T-cell (primary cell): ENCODE measurements at regions of chr5 and their contacts with region 1.

Region 1: DNA sequence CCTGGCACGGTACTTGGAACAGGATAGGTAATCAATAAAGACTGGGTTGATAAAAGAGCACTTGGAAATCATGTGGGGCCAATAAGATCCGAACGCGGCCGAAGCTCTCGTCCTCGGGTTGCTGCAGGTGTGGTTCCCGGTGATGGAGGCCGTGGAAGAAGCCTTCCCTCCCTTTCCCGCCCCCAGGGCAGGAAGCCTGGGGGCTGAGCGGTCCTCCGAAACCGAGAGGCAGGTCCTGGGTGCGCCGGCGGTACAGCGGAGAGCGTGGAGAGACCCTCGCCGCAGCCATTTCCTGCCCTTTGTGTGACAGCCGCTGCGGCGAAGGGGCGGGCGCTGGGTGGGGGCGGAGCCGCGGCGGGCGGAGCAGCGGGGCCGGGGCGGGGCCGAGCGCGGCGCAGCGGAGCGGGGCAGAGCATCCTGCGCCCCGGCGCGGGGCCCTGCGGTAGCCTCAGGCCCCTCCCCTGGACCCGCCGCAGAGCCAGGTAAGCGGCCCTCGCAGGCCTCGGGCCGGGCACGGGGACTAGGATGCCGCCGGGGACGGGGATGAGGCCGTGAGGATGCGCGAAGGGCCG is at the start of gene CYFIP2:
- DNase-seq: peak; percentile 74 to 93 (median 84)
- ATAC-seq: peak; percentile 89 to 93 (median 90)
- H3K4me3 ChIP-seq: peak within 1 kb of the TSS; percentile 68 to 73
- H3K4me3 Mint-ChIP-seq: peak within 1 kb of the TSS; percentile 93 to 96 (median 94)
- H3K27ac ChIP-seq: peak within 1 kb of the TSS; percentile 84
- H3K27ac Mint-ChIP-seq: peak within 1 kb of the TSS; percentile 99
- H3K4me1 ChIP-seq: peaks cover 52 to 63% of the 10 kb centered on the region in 2 experiments
- H3K4me1 Mint-ChIP-seq: peaks cover 70 to 80% (median 78%) of the 10 kb centered on the region in 3 donors
- H3K27me3 ChIP-seq: no peaks in the 10 kb centered on the region
- H3K27me3 Mint-ChIP-seq: no peaks in the 10 kb centered on the region
- total RNA-seq, gene CYFIP2: 362 to 497 (median 398) TPM

Region 2: GRCh38 chr5:157225469-157226422 is 40.1 kb before region 1 on chr5:
- CTCF ChIA-PET with region 1: no interaction called
- POLR2A ChIA-PET with region 1: interaction called in 1 of 2 experiments, 15 read pairs
- DNase-seq: peak in 1 of 35 experiments; percentile 66
- ATAC-seq: no peak
- H3K4me3 ChIP-seq: no peak overlapping the region
- H3K4me3 Mint-ChIP-seq: peak overlapping the region; percentile 22 to 45 (median 43)
- H3K27ac ChIP-seq: peak overlapping the region; percentile 48
- H3K27ac Mint-ChIP-seq: peak overlapping the region; percentile 88 to 89
- H3K4me1 ChIP-seq: peaks cover 42 to 51% of the 10 kb centered on the region in 2 experiments
- H3K4me1 Mint-ChIP-seq: peaks cover 54 to 75% (median 69%) of the 10 kb centered on the region in 3 donors
- H3K27me3 ChIP-seq: no peaks in the 10 kb centered on the region
- H3K27me3 Mint-ChIP-seq: no peaks in the 10 kb centered on the region

Region 3: DNA sequence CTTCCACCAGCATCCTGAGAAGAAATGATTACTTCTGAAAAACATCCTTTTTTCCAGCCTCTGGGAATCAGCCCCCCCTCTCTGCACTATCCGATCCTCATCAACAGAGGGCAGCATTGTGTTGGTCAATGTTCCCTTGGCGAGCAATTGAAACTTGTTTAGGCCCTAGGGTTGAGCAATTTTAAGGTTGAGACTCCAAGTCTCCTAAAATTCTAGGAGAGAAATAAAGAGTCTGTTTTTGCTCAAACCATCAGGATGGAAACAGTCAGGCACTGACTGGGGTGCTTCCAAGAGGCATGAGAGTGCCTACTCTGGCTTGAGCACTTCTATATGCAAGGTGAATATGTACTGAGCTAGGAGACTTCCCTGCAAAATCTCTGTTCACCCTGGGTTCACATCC is 12.3 kb before region 1 on chr5:
- CTCF ChIA-PET with region 1: interaction called, 3 to 15 read pairs
- POLR2A ChIA-PET with region 1: interaction called in 1 of 2 experiments, 9 read pairs
- DNase-seq: peak in 1 of 35 experiments; percentile 61
- ATAC-seq: no peak
- H3K4me3 ChIP-seq: no peak overlapping the region
- H3K4me3 Mint-ChIP-seq: peak overlapping the region; percentile 18 to 64 (median 53)
- H3K27ac ChIP-seq: peak overlapping the region; percentile 80
- H3K27ac Mint-ChIP-seq: peak overlapping the region; percentile 94 to 95
- H3K4me1 ChIP-seq: peaks cover 71 to 86% of the 10 kb centered on the region in 2 experiments
- H3K4me1 Mint-ChIP-seq: peaks cover 96 to 98% (median 97%) of the 10 kb centered on the region in 3 donors
- H3K27me3 ChIP-seq: no peaks in the 10 kb centered on the region
- H3K27me3 Mint-ChIP-seq: no peaks in the 10 kb centered on the region

Region 4: GRCh38 chr5:157993201-157993600 is 727.4 kb after region 1 on chr5:
- CTCF ChIA-PET with region 1: no interaction called
- POLR2A ChIA-PET with region 1: no interaction called
- DNase-seq: no peak
- ATAC-seq: no peak
- H3K4me3 ChIP-seq: no peak overlapping the region
- H3K4me3 Mint-ChIP-seq: no peak overlapping the region
- H3K27ac ChIP-seq: no peak overlapping the region
- H3K27ac Mint-ChIP-seq: no peak overlapping the region
- H3K4me1 ChIP-seq: peaks cover 12 to 23% of the 10 kb centered on the region in 2 experiments
- H3K4me1 Mint-ChIP-seq: peaks cover 17 to 22% (median 18%) of the 10 kb centered on the region in 3 donors
- H3K27me3 ChIP-seq: peaks cover 2 to 36% of the 10 kb centered on the region in 2 experiments
- H3K27me3 Mint-ChIP-seq: peaks cover 35 to 40% of the 10 kb centered on the region in 2 donors